A673 (cell line): ENCODE measurements at regions of chr6 and their contacts with region 1.

Region 1: GRCh38 chr6:86706448-86706847 is 230.9 kb upstream of the HTR1E start:
- DNase-seq: peak; percentile 3
- H3K4me3 ChIP-seq: no peak overlapping the region
- H3K27ac ChIP-seq: no peak overlapping the region
- H3K4me1 ChIP-seq: no peaks in the 10 kb centered on the region
- H3K27me3 ChIP-seq: no peaks in the 10 kb centered on the region
- CTCF ChIP-seq: no peak

Region 2: GRCh38 chr6:86657192-86657591 is 49.3 kb before region 1 on chr6:
- CTCF ChIA-PET with region 1: no interaction called
- POLR2A ChIA-PET with region 1: no interaction called
- intact Hi-C with region 1: loop called (anchors 10 kb)
- DNase-seq: no peak
- H3K4me3 ChIP-seq: no peak overlapping the region
- H3K27ac ChIP-seq: no peak overlapping the region
- H3K4me1 ChIP-seq: no peaks in the 10 kb centered on the region
- H3K27me3 ChIP-seq: no peaks in the 10 kb centered on the region
- CTCF ChIP-seq: no peak

Region 3: DNA sequence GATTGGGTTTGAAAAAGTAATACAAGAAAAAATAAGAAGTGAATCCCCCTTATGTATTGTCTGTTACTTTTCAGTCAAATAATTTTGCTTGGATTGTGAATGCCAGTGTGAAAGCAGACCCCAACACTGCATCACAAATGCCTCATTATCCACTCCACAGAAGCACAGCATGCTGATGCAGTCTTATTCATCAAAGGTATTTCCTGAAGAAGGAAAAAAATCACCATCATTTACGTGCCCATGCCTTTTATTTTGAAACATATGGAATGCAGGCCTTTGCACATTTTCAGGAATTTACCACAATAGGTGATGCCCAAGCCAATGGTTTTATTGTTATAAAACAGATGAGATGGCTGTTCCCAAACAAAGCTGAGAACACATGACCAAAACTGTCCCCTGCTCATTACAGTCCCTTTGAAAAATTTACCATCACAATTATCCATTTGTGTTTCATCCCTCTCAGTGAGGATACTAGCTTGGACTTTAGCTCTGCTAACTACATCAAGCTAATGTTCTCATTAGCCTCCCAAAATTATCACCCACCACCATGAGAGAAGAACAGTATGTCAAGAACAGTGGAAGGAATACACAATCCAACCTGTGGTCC is 50.3 kb after region 1 on chr6:
- CTCF ChIA-PET with region 1: no interaction called
- POLR2A ChIA-PET with region 1: no interaction called
- intact Hi-C with region 1: no loop called
- DNase-seq: no peak
- H3K4me3 ChIP-seq: no peak overlapping the region
- H3K27ac ChIP-seq: no peak overlapping the region
- H3K4me1 ChIP-seq: no peaks in the 10 kb centered on the region
- H3K27me3 ChIP-seq: no peaks in the 10 kb centered on the region
- CTCF ChIP-seq: no peak